WTC11 (cell line): ENCODE measurements at regions of chr3 and their contacts with region 1.

Region 1: DNA sequence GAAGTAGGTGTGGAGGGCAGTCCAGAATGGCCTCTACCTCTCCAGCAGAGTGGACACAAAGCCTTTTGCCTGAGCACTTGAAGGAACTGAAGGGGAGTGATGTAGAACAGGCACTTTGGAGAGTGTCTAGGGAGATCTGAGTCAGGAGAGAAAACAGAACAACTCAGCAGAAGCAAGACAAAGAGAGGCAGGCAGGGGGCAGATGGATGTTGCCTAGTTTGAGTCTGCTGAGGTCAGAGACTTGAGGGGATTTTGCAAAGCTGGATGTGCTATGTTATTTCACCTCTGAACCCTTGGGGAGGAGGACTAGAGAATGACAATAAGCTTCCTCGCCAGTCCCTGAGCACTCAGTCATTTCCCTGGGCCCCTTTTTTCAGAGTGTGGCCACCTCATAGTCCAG is 366.4 kb downstream of the EPHB1 start:
- DNase-seq: no peak
- ATAC-seq: peak; percentile 73
- H3K4me3 Mint-ChIP-seq: no peak overlapping the region
- H3K27ac Mint-ChIP-seq: no peak overlapping the region
- H3K4me1 Mint-ChIP-seq: peaks cover 29% of the 10 kb centered on the region
- H3K27me3 Mint-ChIP-seq: peaks cover 3% of the 10 kb centered on the region; the same call in 1 of the 2 replicates
- CTCF ChIP-seq: no peak

Region 2: DNA sequence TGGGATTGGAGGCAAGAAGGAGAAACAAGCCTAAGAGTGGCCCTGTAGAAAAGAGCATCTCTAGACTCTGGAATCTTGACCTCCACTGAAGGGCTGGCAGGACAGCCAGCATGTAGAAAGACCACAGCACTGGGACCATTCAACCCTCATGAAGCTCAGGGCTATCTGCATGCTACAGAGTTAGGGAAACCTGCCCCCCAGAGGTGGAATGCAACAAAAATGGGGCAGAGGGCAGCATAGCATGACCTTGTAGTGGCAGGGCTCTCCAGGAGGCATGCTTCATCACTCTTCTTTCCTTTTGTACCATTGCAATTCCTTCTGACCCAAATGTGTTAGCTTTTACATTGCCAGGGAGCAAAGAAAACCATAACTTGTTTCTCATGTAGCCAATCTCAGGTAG is 79.0 kb after region 1 on chr3:
- CTCF ChIA-PET with region 1: interaction called, 11 read pairs
- POLR2A ChIA-PET with region 1: no interaction called
- DNase-seq: peak; percentile 60
- ATAC-seq: peak; percentile 85
- H3K4me3 Mint-ChIP-seq: no peak overlapping the region
- H3K27ac Mint-ChIP-seq: no peak overlapping the region
- H3K4me1 Mint-ChIP-seq: peaks cover 29% of the 10 kb centered on the region
- H3K27me3 Mint-ChIP-seq: no peaks in the 10 kb centered on the region
- CTCF ChIP-seq: 0 out of 2 replicates have a peak, but pooled peaks have one; percentile 22